ENCODE measurements at regions of chr2 and their contacts with region 1.

Region 1: DNA sequence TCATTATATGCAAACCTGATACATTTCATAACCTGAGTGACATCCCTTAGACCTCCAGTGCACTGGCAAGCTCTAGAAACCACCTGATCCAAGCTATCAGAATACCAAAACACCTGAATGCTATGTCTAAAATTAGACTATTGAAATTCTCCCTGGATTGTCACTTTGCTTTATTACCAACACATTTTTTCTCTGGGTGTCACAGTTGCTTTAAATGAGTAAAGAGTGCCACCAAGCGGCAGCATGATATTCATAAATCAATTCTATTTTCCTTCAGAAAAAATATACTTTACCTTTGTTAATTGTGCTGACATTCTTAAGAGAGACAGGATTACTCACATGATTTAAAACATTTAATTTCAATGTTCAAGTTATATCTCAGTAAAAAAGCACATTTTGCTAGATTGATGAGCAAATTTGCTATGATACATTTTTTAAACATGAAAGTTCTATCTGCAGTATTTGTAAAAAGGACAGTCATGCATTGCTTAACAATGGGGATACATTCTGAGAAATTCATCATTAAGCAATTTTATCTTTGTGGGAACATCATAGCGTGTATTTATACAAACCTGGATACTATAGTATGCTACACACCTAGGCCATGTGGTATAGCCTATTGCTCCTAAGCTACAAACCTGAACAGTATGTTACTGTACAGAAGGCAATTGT is 338.4 kb upstream of the SLC39A10 start:
- DNase-seq: peak; percentile 37
- H3K4me3 ChIP-seq: no peak overlapping the region
- H3K27ac ChIP-seq: no peak overlapping the region
- H3K4me1 ChIP-seq: no peaks in the 10 kb centered on the region
- H3K27me3 ChIP-seq: no peaks in the 10 kb centered on the region
- CTCF ChIP-seq: peak; percentile 18 to 24
- POLR2A ChIP-seq: no peak

Region 2: DNA sequence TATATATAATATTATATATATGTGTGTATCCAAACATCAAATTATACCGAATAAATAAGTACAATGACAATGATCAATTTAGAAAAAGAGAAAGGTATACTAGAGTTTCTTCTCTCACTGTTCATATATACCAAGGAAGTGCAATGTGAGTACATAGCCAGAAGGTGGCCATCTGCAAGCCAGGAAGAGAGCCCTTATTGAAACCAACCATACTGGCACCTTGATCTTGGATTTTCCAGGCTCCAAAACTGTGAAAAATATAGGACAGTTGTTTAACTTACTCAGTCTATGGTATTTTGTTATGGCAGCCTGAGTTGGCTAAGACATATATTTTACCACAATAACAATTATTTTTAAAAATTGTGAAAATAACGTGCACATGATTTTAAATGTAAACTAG is 1151.8 kb before region 1 on chr2:
- CTCF ChIA-PET with region 1: interaction called, 11 read pairs
- POLR2A ChIA-PET with region 1: no interaction called
- dilution Hi-C with region 1: no loop called
- intact Hi-C with region 1: loop called (anchors 1 kb)
- DNase-seq: peak; percentile 6
- H3K4me3 ChIP-seq: no peak overlapping the region
- H3K27ac ChIP-seq: no peak overlapping the region
- H3K4me1 ChIP-seq: no peaks in the 10 kb centered on the region
- H3K27me3 ChIP-seq: no peaks in the 10 kb centered on the region
- CTCF ChIP-seq: peak; percentile 27 to 38
- POLR2A ChIP-seq: no peak

Region 3: DNA sequence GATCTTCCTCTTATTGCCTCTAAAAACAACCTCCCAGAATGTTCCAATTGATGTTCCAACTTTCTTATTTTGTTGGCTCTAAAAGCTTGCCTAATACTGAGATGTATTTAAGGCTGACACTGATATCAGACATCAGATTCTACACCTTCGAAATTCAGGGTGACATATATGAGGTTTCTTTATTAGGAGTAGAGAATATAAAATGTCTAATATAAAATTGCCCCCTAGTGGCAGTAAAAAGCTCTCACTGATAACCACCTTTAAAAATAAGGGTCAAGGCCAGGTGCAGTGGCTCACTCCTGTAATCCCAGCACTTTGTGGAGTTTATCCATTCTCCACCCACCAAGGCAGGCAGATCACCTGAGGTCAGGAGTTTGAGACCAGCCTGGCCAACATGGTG is 451.2 kb before region 1 on chr2:
- CTCF ChIA-PET with region 1: no interaction called
- POLR2A ChIA-PET with region 1: no interaction called
- dilution Hi-C with region 1: no loop called
- intact Hi-C with region 1: loop called (anchors 10 kb)
- DNase-seq: peak; percentile 47
- H3K4me3 ChIP-seq: no peak overlapping the region
- H3K27ac ChIP-seq: no peak overlapping the region
- H3K4me1 ChIP-seq: no peaks in the 10 kb centered on the region
- H3K27me3 ChIP-seq: no peaks in the 10 kb centered on the region
- CTCF ChIP-seq: peak; percentile 28 to 35
- POLR2A ChIP-seq: no peak

Region 4: DNA sequence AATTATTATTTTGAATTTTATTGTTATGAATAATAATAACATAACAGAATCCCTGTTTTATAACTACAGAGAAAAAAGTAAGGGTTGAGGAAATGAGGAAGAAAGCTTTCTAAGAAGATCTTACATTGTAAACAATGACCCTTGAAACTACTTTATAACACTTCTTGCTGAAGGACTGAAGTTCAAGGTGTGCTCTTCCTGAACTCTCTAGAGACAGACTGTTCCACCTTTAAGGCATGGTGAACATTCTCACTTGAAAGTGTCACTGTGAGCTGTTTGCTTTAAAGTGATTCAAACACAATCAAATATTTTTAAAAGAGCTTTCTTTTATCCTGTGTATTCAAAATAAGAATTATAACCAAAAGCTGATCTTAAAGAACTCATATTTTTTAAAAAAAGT is 618.6 kb after region 1 on chr2:
- CTCF ChIA-PET with region 1: interaction called, 4 read pairs
- POLR2A ChIA-PET with region 1: no interaction called
- dilution Hi-C with region 1: no loop called
- intact Hi-C with region 1: loop called (anchors 5 kb)
- DNase-seq: no peak
- H3K4me3 ChIP-seq: no peak overlapping the region
- H3K27ac ChIP-seq: no peak overlapping the region
- H3K4me1 ChIP-seq: no peaks in the 10 kb centered on the region
- H3K27me3 ChIP-seq: peaks cover 0 to 5% of the 10 kb centered on the region in 2 experiments
- CTCF ChIP-seq: no peak
- POLR2A ChIP-seq: no peak